H1 (cell line): ENCODE measurements at regions of chr3 and their contacts with region 1.

Region 1: DNA sequence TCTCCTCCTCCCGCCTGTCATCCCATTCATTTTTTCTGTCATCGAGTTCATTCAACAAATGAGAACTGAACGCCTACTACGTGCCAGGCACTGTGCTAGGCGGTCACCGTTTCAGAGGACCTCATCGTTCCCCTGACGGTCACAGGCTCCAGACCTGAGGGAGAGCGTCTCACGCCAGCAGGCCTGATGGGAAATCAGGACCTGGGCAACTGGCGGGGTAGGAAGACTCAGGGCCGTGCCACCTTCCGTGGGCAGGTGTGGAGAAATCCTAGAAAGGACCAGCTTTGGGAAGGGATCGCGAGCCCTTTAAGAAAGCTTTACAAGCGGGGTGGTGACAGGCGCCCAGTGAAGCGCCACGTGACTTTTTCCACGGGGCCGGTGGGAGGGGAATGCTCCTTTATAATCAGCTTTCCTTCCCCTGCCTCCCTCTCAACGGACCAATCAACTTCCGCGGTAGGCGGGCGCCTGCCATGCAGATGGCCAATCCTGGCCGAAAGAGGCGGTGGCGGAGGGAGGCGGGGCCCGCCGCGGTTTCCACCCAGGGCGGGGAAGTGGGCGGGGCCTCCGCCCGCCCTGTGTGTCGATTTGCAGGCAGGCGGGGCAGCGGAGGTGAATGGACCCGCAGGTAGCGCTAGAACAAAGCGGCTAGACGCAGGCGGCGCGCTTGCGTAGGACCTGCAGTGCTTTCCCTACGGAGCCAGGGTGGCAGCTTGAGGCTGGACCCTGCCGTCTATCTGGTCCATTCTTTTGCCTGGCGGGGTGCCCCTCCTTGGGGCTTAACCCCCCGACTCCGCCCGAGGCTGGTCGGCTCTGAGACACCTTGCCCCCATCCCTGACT is 816 bp upstream of the DUSP7 start:
- DNase-seq: peak; percentile 97
- H3K4me3 ChIP-seq: peak overlapping the region; percentile 46 to 89 (median 56)
- H3K27ac ChIP-seq: peak overlapping the region; percentile 21; the same call in 1 of the 2 replicates
- H3K4me1 ChIP-seq: peaks cover 0 to 29% (median 17%) of the 10 kb centered on the region in 4 experiments; a peak in 6 of 7 replicates
- H3K27me3 ChIP-seq: peaks cover 0 to 21% (median 11%) of the 10 kb centered on the region in 4 experiments; a peak in 6 of 7 replicates
- CTCF ChIP-seq: no peak
- EP300 ChIP-seq: no peak
- POLR2A ChIP-seq: no peak
- RAD21 ChIP-seq: no peak; a peak in 1 of 4 replicates

Region 2: DNA sequence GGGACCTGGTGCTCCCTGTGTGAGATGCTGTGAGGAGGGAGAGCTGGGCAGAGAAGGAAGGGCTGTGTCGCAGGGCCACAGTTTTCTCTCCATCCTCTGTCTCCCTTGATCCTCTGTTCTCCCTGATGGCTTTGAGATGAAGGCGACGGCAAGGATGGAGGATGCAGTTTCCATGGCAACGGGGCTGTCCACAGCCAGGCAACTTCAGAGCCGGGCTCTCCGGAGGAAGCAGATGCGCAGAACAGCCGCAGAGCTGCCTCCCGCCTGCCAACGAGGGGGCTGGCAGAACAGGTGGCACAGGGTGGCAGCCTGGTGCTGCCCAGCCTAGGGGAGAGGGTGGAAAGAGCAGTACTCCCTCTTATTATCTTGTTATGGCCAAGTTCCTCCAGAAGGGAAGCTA is 360.2 kb before region 1 on chr3:
- CTCF ChIA-PET with region 1: no interaction called
- POLR2A ChIA-PET with region 1: no interaction called
- DNase-seq: no peak
- H3K4me3 ChIP-seq: no peak overlapping the region
- H3K27ac ChIP-seq: no peak overlapping the region
- H3K4me1 ChIP-seq: no peaks in the 10 kb centered on the region
- H3K27me3 ChIP-seq: peaks cover 0 to 1% (median 0%) of the 10 kb centered on the region in 4 experiments; a peak in 1 of 7 replicates
- CTCF ChIP-seq: no peak
- EP300 ChIP-seq: no peak
- POLR2A ChIP-seq: no peak
- RAD21 ChIP-seq: no peak

Region 3: DNA sequence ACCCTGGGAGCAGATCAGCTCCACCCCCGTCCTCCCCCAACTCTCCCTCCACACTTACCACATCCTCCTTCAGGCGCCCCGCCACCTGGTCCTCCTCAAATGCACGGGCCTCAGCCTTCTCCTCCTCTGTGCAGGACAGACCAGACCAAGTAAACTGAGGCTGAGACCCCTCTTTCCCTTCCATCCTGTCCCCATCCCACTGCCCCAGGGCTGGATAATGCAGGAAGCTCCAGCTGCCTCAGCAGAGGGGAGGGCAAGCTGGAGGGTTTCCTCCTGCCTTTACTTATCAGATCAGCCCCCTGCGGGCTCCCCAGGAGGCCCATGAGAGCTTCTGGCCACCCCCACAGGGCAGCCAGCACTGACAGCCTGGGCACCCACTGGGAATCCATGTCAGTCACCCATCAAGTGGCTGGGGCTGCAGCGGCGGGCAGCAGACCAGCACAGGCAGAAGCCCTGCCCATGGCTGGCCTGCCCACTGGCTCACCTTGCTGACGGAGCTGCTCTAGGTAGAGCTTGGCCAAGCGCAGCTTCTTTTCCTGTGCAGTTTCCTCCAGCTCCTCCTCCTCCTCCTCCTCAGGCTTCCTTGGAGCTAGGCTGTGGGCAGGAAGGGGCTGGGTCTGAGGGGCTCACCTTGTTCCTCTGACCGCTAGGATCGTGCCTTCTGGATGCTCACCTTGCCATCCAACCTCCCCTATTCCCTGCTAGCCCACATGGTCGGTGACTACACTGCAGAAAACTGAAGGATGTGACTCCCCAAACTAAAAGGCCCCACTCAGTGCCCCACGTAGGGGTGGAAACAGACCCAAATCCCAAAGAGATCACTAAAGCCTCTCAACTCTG is 119.4 kb before region 1 on chr3:
- CTCF ChIA-PET with region 1: no interaction called
- POLR2A ChIA-PET with region 1: no interaction called
- DNase-seq: no peak
- H3K4me3 ChIP-seq: no peak overlapping the region
- H3K27ac ChIP-seq: no peak overlapping the region
- H3K4me1 ChIP-seq: peaks cover 2 to 13% (median 6%) of the 10 kb centered on the region in 4 experiments
- H3K27me3 ChIP-seq: peaks cover 0 to 3% (median under 1%) of the 10 kb centered on the region in 4 experiments; a peak in 3 of 7 replicates
- CTCF ChIP-seq: no peak
- EP300 ChIP-seq: no peak
- POLR2A ChIP-seq: no peak
- RAD21 ChIP-seq: no peak

Region 4: DNA sequence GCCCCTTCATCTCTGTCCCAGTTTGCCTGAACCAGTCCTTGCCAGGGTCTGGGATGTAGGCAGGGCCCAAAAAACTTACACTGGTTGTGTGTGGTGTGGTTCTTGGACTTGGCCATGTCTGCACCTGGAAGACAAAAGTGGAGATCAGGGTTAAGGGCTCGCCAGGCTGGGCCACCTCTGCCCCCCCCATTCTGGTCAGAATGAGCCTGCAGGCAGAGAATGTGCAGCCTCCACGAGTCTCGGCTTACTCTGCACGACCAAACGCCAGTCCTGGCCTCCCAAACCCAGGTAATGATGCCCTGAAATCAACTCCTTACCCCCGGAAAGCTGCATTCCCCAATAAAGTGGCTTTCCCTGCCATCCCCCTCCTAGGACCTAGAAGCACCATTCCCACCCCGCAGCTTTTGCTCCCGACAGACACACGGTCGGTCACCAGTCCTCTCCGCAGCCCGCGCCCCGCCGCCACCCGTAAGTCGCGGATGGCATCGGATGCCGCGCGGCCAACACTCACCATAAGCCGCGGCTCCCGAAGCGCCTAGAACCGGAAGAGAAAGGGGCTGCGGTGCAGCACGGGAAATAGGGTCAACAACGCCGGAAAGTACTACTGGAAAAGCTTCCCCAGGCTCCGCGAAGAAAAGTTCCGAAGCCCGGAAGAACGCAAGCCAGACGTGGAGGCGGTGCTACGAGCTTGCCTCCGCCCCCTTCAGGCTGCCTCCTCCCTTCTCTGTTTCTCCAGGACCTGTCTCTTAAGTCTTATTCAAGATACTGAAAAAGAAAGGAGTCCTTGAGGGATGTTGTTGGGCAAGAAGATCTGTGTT is 61.6 kb before region 1 on chr3 and contains the start of gene RPL29:
- CTCF ChIA-PET with region 1: interaction called, 984 read pairs
- POLR2A ChIA-PET with region 1: interaction called, 60 read pairs
- DNase-seq: peak; percentile 89 to 91
- H3K4me3 ChIP-seq: peak within 1 kb of the TSS; percentile 76 to 100 (median 88)
- H3K27ac ChIP-seq: peak within 1 kb of the TSS; percentile 91
- H3K4me1 ChIP-seq: peaks cover 4 to 20% (median 8%) of the 10 kb centered on the region in 4 experiments; a peak in 5 of 7 replicates
- H3K27me3 ChIP-seq: no peaks in the 10 kb centered on the region
- CTCF ChIP-seq: peak in 1 of 3 experiments; percentile 2; a peak in 1 of 4 replicates
- EP300 ChIP-seq: peak in 1 of 2 experiments; percentile 24; a peak in 1 of 3 replicates
- POLR2A ChIP-seq: peak in 1 of 2 experiments; percentile 96; a peak in 2 of 3 replicates
- RAD21 ChIP-seq: no peak
- total RNA-seq, gene RPL29: 1,467 and 1,476 TPM in 2 replicates

Region 5: DNA sequence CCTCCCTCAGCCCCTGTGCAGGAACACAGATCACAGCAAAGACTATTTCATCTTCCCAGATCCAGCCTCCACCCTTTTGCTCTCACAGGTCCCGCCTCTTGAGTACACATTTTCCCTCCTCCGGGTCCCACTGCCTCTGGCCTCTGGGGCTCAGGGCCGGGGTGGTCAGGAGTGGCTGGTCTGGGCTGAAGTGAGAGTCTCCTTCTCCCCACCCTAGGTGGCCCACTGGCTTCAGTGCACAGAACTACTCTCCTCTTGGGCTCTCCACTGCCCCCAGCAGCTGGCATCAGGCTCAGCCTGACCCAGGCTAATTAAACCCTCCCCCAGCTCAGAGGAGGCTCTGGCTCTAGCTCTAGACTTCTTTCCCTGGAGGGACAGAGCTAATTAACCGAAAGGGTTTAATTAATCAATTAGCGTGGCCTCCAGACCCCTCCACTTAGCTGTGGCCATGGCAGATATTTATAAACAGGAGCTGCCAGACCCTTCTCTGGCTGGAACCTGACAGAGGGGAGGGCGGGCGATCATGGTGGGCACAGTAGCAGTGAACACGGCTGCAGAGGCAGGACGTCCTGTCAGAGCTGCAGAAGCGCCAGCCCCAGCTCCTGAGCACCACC is 16.0 kb before region 1 on chr3:
- CTCF ChIA-PET with region 1: interaction called, 160 read pairs
- POLR2A ChIA-PET with region 1: interaction called, 24 read pairs
- DNase-seq: no peak
- H3K4me3 ChIP-seq: no peak overlapping the region
- H3K27ac ChIP-seq: no peak overlapping the region
- H3K4me1 ChIP-seq: peaks cover 0 to 12% (median 4%) of the 10 kb centered on the region in 4 experiments; a peak in 5 of 7 replicates
- H3K27me3 ChIP-seq: no peaks in the 10 kb centered on the region
- CTCF ChIP-seq: peak in 2 of 3 experiments; percentile 51 to 56; a peak in 3 of 4 replicates
- EP300 ChIP-seq: no peak
- POLR2A ChIP-seq: no peak
- RAD21 ChIP-seq: peak; percentile 27 to 39; a peak in 2 of 4 replicates

Region 6: GRCh38 chr3:52076896-52077780 is 20.0 kb after region 1 on chr3:
- CTCF ChIA-PET with region 1: interaction called, 14 read pairs
- POLR2A ChIA-PET with region 1: interaction called, 4 read pairs
- DNase-seq: no peak
- H3K4me3 ChIP-seq: no peak overlapping the region
- H3K27ac ChIP-seq: no peak overlapping the region
- H3K4me1 ChIP-seq: no peaks in the 10 kb centered on the region; a peak in 2 of 7 replicates
- H3K27me3 ChIP-seq: no peaks in the 10 kb centered on the region; a peak in 2 of 7 replicates
- CTCF ChIP-seq: no peak
- EP300 ChIP-seq: no peak
- POLR2A ChIP-seq: no peak
- RAD21 ChIP-seq: no peak

Region 7: GRCh38 chr3:52123106-52123725 is 66.0 kb after region 1 on chr3:
- CTCF ChIA-PET with region 1: interaction called, 51 read pairs
- POLR2A ChIA-PET with region 1: interaction called, 4 read pairs
- DNase-seq: peak; percentile 33 to 92
- H3K4me3 ChIP-seq: no peak overlapping the region
- H3K27ac ChIP-seq: no peak overlapping the region
- H3K4me1 ChIP-seq: no peaks in the 10 kb centered on the region
- H3K27me3 ChIP-seq: no peaks in the 10 kb centered on the region
- CTCF ChIP-seq: peak; percentile 95 to 100 (median 100)
- EP300 ChIP-seq: no peak
- POLR2A ChIP-seq: no peak
- RAD21 ChIP-seq: peak; percentile 92 to 93